Activated T-helper 1 cell treated with anti-CD3 and anti-CD28 coated beads, Interleukin-12 subunit alpha, Interleukin-12 subunit beta, Interleukin-2, Interleukin-4 antibody, amounts not matched to agents 30 ng/mL and 10 ng/mL and 1 ng/mL, durations not matched to agents 14 hours and 24 hours and 36 hours (primary cell): ENCODE measurements at regions of chr2 and their contacts with region 1.

Region 1: GRCh38 chr2:70142590-70143313 is 48.1 kb downstream of the C2orf42 start:
- DNase-seq: peak; percentile 100
- H3K4me3 Mint-ChIP-seq: peak overlapping the region; percentile 80
- H3K27ac Mint-ChIP-seq: peak overlapping the region; percentile 91
- H3K4me1 Mint-ChIP-seq: peaks cover 58% of the 10 kb centered on the region
- H3K27me3 Mint-ChIP-seq: no peaks in the 10 kb centered on the region

Region 2: DNA sequence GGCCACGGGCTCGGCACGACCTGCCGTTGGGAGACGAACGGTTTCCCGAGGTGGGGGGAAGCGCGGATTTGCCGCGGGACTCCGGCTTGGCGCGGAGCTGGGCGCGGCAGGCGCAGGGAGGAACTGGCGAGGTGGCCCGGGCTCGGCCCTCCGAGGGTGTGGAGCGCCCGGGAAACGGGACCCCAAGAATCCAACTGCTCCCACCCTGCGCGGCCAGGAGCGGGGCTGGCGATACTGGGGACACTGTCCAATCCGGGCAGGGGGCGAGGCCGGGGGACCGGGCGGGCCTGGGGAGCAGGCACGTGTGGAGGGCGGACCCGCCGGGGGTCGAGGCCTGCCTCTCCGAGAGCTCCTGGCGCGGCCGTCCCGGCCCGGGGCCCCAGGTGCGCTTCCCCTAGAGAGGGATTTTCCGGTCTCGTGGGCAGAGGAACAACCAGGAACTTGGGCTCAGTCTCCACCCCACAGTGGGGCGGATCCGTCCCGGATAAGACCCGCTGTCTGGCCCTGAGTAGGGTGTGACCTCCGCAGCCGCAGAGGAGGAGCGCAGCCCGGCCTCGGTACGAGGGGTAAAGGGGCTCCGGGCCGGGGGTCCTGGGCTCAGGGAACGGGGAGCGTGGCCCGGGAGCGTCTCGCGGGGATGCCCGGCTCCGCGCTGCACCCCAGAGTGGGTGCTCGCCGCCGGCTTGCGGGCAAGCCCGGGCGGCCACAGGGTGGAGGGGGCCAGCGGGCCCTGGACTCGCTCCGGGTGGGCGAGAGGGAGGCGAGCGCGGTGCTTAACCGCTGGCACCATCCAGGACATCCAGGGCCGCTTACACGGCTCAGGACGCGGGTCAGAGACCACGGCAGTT is 400.9 kb before region 1 on chr2 and contains the start of gene ANXA4:
- intact Hi-C with region 1: loop called (anchors 10 kb)
- DNase-seq: peak; percentile 63
- H3K4me3 Mint-ChIP-seq: peak within 1 kb of the TSS; percentile 98
- H3K27ac Mint-ChIP-seq: peak within 1 kb of the TSS; percentile 96
- H3K4me1 Mint-ChIP-seq: peaks cover 26% of the 10 kb centered on the region
- H3K27me3 Mint-ChIP-seq: peaks cover 6% of the 10 kb centered on the region
- total RNA-seq, gene ANXA4: 36.2 and 38.0 TPM in 2 replicates

Region 3: DNA sequence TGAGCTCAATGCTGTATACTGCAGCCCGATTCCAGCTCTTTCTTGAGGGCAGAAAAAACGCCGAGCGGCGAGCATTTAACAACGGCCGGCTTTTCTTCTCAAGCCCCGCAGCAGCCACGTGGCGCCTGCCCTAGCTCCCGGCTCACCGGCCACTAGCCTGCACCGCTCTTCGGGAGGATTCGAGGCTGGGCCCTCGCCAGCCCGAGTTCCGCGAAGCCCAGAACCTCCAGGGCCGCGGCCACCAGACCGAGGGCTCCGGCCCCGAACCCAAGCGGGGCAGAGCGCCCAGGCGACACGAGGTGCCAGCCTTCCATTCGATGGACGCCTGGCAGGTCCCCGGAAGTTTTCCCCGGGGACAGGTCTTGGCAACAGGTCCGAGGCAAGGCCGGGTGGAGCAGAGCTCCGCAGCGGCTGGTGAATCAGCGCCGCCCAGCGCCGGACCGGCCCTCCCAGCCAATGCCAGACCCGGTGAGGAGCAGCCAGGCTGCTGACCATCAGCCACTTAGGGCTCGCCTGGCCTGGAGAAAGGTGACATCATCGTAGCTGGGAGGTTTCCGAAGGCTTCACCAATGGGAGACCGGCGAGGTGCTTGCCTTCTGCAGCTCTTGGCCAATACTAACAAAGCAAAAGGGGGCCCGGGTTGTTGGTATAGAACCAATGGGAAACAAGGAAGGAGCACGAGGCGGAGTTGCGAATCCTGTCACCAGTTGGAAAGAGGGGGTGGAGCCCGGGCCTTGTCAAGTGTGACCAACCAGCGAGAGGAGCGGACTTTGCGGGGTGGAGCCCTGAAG is 228.4 kb before region 1 on chr2:
- intact Hi-C with region 1: loop called (anchors 1 kb)
- DNase-seq: peak; percentile 100
- H3K4me3 Mint-ChIP-seq: peak overlapping the region; percentile 78
- H3K27ac Mint-ChIP-seq: peak overlapping the region; percentile 90
- H3K4me1 Mint-ChIP-seq: peaks cover 42% of the 10 kb centered on the region
- H3K27me3 Mint-ChIP-seq: no peaks in the 10 kb centered on the region

Region 4: GRCh38 chr2:70069049-70069448 is 73.7 kb before region 1 on chr2:
- intact Hi-C with region 1: loop called (anchors 1 kb)
- DNase-seq: peak; percentile 81
- H3K4me3 Mint-ChIP-seq: peak overlapping the region; percentile 68
- H3K27ac Mint-ChIP-seq: peak overlapping the region; percentile 83
- H3K4me1 Mint-ChIP-seq: peaks cover 47% of the 10 kb centered on the region
- H3K27me3 Mint-ChIP-seq: no peaks in the 10 kb centered on the region

Region 5: DNA sequence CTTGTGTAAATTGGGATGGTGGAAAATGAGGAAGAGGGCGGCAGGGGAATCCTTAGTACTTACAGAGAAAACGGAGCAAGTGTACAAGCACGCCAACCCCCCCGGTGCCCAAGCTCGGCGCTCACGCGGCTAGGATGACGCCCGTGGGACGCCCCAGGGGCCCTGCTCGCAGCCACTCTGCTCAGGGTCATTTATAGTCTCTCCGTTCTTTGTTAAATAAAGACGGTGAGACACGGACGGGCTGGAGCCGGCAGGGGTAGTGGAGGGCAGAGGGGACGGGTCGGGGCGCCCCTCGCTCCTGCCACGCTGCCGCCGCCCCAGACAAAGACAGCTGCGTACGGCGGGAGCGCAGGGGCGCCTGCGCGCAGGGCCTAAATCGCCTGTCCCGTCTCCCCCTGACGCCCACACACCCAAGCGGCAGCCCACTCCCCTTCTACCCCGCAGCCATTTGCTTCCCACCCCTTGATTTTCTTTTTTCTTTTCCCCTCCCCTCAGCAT is 17.7 kb before region 1 on chr2:
- intact Hi-C with region 1: loop called (anchors 1 kb)
- DNase-seq: peak; percentile 42
- H3K4me3 Mint-ChIP-seq: peak overlapping the region; percentile 93
- H3K27ac Mint-ChIP-seq: peak overlapping the region; percentile 99
- H3K4me1 Mint-ChIP-seq: peaks cover 78% of the 10 kb centered on the region
- H3K27me3 Mint-ChIP-seq: no peaks in the 10 kb centered on the region

Region 6: DNA sequence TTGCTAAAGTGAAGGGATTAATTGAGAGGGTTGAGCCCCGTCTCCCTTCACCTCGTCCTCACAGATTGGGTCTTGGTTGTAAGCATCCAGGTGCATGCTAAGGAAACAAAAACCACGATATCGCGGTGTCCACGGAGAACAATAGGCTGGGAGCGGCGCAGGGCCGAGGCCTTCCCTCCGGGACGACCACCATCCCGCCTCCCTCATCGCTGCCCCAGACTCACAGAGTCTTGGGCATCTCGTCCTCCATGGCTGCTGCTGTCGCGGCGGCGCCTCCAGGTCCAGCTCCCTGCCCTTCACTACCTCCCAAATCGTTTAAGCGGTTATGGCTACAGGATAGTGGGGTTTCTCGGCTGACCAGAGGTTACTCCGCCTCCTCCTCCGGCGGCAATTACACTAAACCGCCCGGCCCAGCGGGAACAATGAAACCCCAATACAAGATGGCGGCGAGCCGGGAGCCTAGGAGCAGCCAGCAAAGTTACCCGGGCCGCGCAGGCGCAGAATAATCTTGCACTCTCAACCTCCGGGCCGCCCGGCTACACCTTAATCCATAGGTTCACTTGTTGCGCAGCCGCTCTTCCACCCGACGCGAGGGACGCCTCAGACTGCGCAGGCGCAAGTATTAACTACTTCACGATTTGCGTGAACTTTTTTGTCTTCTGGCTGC is 105.6 kb after region 1 on chr2 and contains the start of gene TIA1:
- intact Hi-C with region 1: loop called (anchors 2 kb)
- DNase-seq: peak; percentile 98
- H3K4me3 Mint-ChIP-seq: peak within 1 kb of the TSS; percentile 99
- H3K27ac Mint-ChIP-seq: peak within 1 kb of the TSS; percentile 99
- H3K4me1 Mint-ChIP-seq: peaks cover 42% of the 10 kb centered on the region
- H3K27me3 Mint-ChIP-seq: no peaks in the 10 kb centered on the region
- total RNA-seq, gene TIA1: 96.8 and 101 TPM in 2 replicates

Region 7: GRCh38 chr2:70301344-70302194 is 158.8 kb after region 1 on chr2 and contains the start of gene FAM136A:
- intact Hi-C with region 1: no loop called
- DNase-seq: peak; percentile 85
- H3K4me3 Mint-ChIP-seq: peak within 1 kb of the TSS; percentile 91
- H3K27ac Mint-ChIP-seq: peak within 1 kb of the TSS; percentile 93
- H3K4me1 Mint-ChIP-seq: peaks cover 41% of the 10 kb centered on the region
- H3K27me3 Mint-ChIP-seq: peaks cover 6% of the 10 kb centered on the region
- total RNA-seq, gene FAM136A: 88.9 and 89.1 TPM in 2 replicates